Transverse colon (tissue), 4 donors: ENCODE measurements at regions of chr3 and their contacts with region 1.

Region 1: DNA sequence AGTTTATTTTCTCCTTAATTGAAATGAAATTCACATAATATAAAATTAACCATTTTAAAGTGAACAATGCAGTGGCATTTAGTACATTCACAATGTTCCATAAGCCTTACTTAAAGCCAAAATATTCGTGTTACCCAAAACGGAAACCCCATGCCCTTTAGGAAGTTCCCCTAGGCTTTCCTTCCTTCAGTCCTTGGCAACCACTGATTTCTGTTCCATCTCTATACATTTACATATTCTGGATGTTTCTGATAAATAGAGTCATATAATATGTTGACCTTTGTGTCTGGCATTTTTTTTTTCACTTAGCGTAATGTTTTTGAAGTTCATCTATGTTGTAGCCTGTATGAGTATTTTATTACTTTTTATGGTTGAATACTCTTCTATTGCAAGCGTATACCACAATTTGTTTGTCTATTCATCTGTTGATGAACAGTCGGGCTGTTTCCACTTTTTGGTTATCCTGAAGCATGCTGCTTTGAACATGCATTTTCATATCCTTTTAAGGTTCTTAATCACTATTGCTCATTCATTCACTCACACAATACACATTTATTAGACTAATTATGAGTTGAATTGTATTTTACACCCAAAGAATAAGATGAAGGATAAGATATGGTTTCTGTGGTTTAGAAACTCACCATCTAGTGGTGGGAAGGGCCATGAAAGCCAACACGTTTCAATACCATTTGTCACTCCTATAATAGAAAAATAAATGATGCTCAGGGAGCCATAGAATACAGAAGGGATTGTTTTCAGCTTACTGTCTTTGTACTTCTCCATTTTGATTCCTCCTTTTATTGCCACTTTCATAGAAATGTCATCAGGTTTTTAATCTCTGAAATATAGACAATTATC is 408.2 kb upstream of the CBLB start:
- DNase-seq: no peak
- H3K4me3 ChIP-seq: no peak overlapping the region
- H3K27ac ChIP-seq: no peak overlapping the region
- H3K4me1 ChIP-seq: no peaks in the 10 kb centered on the region
- H3K27me3 ChIP-seq: no peaks in the 10 kb centered on the region
- CTCF ChIP-seq: no peak
- EP300 ChIP-seq: no peak
- POLR2A ChIP-seq: no peak

Region 2: DNA sequence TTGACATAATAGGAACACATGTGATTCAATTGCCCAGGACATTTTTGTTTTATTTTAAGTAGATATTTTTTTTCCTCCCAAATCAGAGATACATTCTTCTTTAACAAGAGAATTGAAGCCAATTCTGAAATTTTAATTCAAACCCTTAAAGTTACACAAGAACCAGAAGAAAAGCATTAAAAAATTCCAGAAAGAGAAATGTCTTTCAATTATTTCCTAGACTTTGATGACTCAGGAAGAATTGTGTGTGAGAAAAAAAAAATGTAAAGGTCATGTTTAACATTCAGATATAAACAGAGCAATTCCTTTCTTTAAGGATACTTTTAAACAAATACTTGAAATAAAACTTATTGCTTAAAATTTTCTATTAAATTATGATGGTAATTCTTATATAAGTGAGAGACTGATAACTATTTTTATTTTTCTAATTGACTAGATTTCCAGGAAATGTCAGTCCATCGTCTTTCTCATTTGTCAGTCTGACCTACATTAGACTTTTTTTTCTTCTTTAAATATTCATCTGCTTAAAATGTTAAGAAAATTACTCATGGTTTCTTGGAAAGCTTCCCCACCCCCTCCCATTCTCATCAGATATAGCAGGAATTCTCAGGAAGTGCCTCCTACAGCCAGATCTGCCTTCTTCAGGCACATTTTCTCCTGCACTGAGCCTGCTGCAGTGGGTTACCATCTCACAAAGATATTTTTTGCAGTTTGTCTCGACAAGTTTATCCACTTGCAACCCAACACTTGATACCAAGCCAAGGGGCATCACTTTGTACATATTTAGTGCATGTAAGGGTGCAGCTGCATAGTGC is 146.4 kb before region 1 on chr3:
- in situ Hi-C with region 1: no loop called
- intact Hi-C with region 1: no loop called
- DNase-seq: no peak
- H3K4me3 ChIP-seq: no peak overlapping the region
- H3K27ac ChIP-seq: no peak overlapping the region
- H3K4me1 ChIP-seq: peaks cover 0 to 17% (median 0%) of the 10 kb centered on the region in 4 donors
- H3K27me3 ChIP-seq: no peaks in the 10 kb centered on the region
- CTCF ChIP-seq: no peak
- EP300 ChIP-seq: no peak
- POLR2A ChIP-seq: no peak

Region 3: DNA sequence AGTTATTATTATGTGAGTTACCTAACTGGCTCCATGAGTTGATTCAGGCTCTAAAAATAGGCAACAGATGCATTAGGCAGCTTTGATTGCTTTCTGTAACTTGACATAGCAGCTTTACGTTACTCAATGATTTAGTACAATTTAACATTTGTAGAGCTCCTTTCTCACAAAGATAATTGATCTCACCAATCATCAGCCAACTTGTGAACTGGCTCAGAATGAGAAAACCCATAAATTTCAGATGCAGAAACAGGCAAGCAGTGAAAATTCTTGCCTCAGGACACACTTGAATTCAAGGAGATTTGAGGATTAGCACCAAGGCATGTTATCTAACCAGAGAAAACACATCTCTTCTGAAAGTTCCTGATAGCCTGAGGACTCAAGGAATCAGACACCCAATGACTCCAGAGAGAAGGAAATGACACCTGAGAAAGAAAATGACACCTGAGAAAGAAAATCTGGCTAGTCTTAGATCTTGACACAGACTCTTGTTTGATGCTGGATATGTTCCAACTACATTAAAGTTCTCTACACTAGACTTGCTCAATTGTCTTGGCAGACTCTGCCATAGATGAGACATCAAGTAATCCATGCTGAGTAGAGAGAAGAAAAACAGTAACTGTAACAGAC is 93.1 kb before region 1 on chr3:
- in situ Hi-C with region 1: no loop called
- intact Hi-C with region 1: loop called (anchors 10 kb)
- DNase-seq: no peak
- H3K4me3 ChIP-seq: no peak overlapping the region
- H3K27ac ChIP-seq: no peak overlapping the region
- H3K4me1 ChIP-seq: peaks cover 0 to 8% (median 0%) of the 10 kb centered on the region in 4 donors
- H3K27me3 ChIP-seq: no peaks in the 10 kb centered on the region
- CTCF ChIP-seq: no peak
- EP300 ChIP-seq: no peak
- POLR2A ChIP-seq: no peak

Region 4: DNA sequence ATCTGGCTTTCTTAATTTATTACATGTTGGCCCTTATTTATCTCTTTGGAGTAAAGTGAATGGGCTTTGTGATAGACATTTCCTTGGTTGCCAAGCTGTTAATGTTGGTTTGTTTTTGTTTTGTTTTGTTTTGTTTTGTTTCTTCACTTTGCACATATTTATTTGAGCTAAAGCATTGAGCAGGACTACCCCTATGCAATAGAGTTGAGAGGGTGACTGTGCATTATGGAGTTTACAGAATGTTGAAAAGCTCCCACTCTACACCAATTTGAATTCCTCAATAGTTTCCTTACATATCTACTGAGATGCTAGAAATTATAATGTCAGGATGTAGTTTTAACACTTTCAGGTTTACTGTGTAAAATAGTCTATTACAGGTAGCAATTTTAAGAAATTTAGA is 54.7 kb after region 1 on chr3:
- in situ Hi-C with region 1: no loop called
- intact Hi-C with region 1: loop called (anchors 2 kb)
- DNase-seq: no peak
- H3K4me3 ChIP-seq: no peak overlapping the region
- H3K27ac ChIP-seq: no peak overlapping the region
- H3K4me1 ChIP-seq: no peaks in the 10 kb centered on the region
- H3K27me3 ChIP-seq: no peaks in the 10 kb centered on the region
- CTCF ChIP-seq: no peak
- EP300 ChIP-seq: no peak
- POLR2A ChIP-seq: no peak

Region 5: DNA sequence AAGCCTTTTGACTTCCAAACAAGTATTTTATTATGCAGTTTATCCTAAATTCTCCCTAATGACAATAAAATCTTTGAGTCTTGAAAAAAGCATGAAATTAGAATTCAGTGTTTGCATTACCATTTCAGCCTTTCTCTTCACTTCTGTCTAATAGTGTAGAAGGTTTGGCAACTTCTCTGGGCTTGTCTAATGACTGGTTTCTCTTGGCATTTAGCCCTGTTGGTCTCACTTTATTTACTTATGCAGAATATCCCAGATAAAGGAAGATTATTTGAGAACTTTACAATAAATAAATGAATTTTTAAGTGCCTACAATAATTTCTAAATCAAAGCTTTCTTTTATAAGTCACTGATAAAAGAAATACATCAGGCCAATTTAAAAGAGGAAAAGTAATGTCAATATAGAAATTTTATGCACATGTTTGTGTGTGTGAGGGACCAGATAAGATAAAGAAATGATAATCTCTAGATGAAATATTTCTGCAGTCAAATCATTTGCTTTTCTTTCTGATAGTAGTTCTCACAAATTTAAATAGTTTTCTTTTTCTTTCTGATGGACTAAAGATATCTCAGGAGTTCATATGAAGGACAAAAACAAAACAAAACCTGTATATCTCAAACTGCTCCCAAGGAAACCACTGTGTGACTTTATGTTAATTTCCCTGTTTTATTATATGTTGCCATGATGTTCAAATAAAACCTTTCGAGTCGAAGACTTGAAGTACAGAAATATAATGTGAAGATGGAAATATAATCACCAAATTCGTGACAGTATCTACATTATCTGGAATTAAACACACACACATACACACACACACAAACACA is 124.9 kb after region 1 on chr3:
- in situ Hi-C with region 1: no loop called
- intact Hi-C with region 1: no loop called
- DNase-seq: no peak
- H3K4me3 ChIP-seq: no peak overlapping the region
- H3K27ac ChIP-seq: no peak overlapping the region
- H3K4me1 ChIP-seq: no peaks in the 10 kb centered on the region
- H3K27me3 ChIP-seq: no peaks in the 10 kb centered on the region
- CTCF ChIP-seq: no peak
- EP300 ChIP-seq: no peak
- POLR2A ChIP-seq: no peak